Activated B cell treated with CpG ODN at 0.5 μM for 24 hours (primary cell): ENCODE measurements at regions of chr18 and their contacts with region 1.

Region 1: DNA sequence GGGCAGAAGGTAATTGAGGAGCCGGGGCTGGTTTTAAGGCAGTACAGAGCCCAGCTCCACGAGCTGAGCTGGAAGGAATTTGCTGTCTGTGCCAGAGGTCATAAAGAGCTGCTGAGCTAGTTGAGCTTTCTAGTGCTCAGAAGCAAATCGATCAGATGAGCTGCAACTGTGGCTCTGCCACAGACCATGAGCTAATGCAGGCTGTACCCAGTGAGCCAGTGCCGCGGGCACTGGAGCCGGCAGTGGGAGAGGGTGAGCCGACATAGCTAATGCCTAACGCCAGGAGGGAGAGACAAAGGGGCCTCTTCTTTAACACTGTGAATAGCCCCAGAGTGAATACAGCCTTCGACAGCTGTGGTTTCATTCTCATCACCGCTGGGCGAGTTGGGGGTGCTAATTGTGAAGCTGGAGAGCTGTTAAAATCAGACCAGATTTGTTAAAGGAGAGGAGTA is 410.1 kb upstream of the TCF4 start:
- DNase-seq: no peak
- ATAC-seq: no peak
- H3K4me3 Mint-ChIP-seq: peak overlapping the region; percentile 29
- H3K27ac Mint-ChIP-seq: peak overlapping the region; percentile 10
- H3K4me1 Mint-ChIP-seq: peaks cover 19% of the 10 kb centered on the region
- H3K27me3 Mint-ChIP-seq: no peaks in the 10 kb centered on the region
- CTCF ChIP-seq: no peak

Region 2: DNA sequence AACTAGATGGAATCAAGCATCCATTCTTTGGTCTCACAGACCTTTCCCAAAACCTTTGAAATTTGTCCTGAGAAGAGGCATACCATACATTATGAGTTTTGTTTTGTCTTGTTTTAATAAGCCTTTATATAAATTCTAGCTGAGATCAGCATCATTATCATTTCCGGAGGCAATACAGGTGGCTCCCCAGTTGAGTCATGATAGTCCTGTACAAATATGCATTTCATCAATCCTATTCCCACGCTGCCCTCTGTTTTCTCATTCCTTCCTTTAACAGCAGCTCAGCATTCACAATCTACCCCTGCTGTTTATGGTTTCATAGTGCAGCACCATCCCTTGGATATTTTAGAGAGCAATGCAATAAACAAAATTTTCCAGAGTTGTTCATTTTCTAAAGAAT is 423.6 kb after region 1 on chr18:
- CTCF ChIA-PET with region 1: no interaction called
- POLR2A ChIA-PET with region 1: no interaction called
- intact Hi-C with region 1: loop called (anchors 10 kb)
- DNase-seq: no peak
- ATAC-seq: no peak
- H3K4me3 Mint-ChIP-seq: no peak overlapping the region
- H3K27ac Mint-ChIP-seq: no peak overlapping the region
- H3K4me1 Mint-ChIP-seq: no peaks in the 10 kb centered on the region
- H3K27me3 Mint-ChIP-seq: peaks cover 3% of the 10 kb centered on the region
- CTCF ChIP-seq: no peak